Right ventricle myocardium inferior (tissue), 1 donor: ENCODE measurements at regions of chr2 and their contacts with region 1.

Region 1: DNA sequence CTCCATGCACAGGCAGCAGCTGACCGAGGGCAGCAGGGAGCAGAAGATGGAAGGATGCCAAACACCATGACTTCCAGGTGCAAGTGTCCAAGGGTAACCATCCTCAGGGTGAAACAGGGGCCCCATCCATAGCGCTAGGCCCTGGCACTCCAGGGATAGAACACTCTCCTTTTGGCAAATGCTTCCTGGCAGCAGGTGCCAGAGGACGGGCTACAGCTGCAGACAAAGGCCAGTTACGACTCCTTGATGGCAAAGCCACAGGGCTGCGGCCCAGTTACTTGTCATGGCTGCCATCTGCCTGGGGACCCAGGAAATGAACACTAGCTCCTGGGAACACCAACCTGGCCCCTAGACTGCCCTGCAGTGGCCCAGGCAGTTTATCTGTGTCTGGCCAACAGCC is 178.8 kb downstream of the TMEM163 start:
- DNase-seq: no peak
- ATAC-seq: peak; percentile 51

Region 2: GRCh38 chr2:134466141-134466540 is 73.8 kb before region 1 on chr2:
- intact Hi-C with region 1: loop called (anchors 5 kb)
- DNase-seq: no peak
- ATAC-seq: no peak